Endothelial cell of umbilical vein (primary cell): ENCODE measurements at regions of chr11 and their contacts with region 1.

Region 1: GRCh38 chr11:64185816-64186498 is at the start of gene STIP1:
- DNase-seq: peak; percentile 100
- H3K4me3 ChIP-seq: peak within 1 kb of the TSS; percentile 17 to 65 (median 56)
- H3K27ac ChIP-seq: peak within 1 kb of the TSS; percentile 64
- H3K4me1 ChIP-seq: peaks cover 14% of the 10 kb centered on the region
- H3K27me3 ChIP-seq: no peaks in the 10 kb centered on the region
- CTCF ChIP-seq: peak; percentile 30 to 67
- POLR2A ChIP-seq: no peak
- total RNA-seq, gene STIP1: 223 and 226 TPM in 2 replicates

Region 2: DNA sequence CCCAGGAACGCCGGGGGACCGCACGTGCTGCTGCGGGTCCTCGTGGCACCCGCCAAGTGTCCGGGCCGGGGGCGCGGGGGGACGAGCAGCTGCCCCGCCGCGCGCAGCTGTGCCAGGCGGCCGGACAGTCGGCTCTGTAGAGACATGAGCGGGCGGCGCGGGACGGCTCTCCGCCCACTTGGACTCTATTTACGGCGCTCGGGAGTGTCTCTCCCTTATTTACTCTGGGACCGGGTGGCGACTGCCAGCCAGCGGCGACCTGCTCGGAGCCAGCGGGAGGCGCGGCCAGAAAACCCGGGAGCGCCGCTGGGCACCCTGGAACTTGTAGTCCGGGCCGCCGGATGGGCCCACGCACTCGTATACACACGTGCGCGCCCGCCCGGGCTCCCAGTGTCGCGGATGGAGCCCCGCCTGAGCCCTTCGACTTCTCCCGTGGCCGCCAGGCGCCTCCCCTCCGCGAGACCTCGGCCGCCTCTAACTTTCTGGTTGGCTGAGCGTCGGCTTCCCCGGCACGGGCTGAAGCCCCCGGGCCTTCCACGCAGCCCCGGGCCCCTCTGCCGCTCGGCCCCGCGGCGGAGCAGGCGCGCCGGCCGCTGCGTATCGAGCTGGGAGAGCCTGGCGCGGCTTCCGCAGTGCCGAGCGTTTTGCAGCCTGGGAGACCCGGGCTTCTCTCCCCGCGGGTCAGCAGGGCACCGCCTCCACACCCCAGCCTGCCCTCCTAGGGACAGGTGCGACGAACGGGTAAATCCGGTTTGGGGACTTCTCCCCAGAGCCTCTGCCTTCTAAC is 19.9 kb before region 1 on chr11 and contains the start of gene MACROD1:
- CTCF ChIA-PET with region 1: interaction called, 4 read pairs
- POLR2A ChIA-PET with region 1: interaction called, 6 read pairs
- dilution Hi-C with region 1: no loop called
- intact Hi-C with region 1: loop called (anchors 1 kb)
- DNase-seq: peak; percentile 84
- H3K4me3 ChIP-seq: peak within 1 kb of the TSS; percentile 25 to 50 (median 49)
- H3K27ac ChIP-seq: peak within 1 kb of the TSS; percentile 1
- H3K4me1 ChIP-seq: peaks cover 7% of the 10 kb centered on the region
- H3K27me3 ChIP-seq: no peaks in the 10 kb centered on the region
- CTCF ChIP-seq: no peak
- POLR2A ChIP-seq: peak; percentile 71
- total RNA-seq, gene MACROD1: 16.2 and 16.6 TPM in 2 replicates

Region 3: DNA sequence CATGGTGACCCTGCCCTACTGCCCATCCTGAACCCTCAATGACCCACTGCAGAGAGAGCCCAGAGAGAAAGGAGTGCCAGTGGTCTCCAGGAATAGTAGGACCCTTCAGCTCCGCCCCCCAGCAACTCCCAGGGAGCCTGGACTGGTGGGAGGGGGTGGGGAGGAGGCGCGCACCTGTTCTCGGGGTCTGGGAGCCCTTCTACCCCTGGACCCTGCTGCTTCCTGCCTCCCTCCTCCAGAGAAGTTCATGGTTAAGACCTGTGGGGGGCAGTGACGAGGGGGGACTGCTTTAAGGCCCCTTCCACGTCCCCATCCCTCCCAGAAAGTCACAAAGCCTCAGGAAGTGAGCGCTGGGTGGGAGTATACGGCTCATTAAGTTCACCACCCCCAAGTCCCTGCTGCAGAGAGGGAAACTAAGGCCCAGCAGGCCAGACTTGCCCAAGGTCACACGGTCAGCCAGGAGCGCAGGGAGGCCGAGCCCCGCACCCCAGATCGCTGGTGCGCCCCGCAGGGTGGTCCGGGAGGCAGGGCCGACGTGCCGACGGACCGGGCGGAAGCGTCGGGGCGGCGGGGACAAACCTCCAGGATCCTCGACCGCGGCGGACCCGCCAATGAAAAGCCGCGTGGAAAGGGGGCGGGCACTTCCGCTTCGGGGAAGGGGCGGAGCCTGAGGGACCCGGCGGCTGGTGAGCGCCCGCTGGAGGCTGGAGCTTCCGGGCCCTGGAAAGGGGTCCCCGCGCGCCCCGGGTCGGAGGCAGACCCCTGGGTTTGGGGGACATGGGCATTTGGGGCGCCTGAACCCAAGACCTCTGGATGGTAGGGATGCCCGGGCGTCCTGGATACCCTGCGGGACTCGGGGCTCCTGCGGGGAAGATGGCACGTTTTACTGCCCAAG is 39.9 kb after region 1 on chr11 and contains the starts of genes NUDT22 and TRPT1:
- CTCF ChIA-PET with region 1: no interaction called
- POLR2A ChIA-PET with region 1: interaction called, 3 read pairs
- dilution Hi-C with region 1: no loop called
- intact Hi-C with region 1: loop called (anchors 5 kb)
- DNase-seq: peak; percentile 83
- H3K4me3 ChIP-seq: peak within 1 kb of the TSS; percentile 62 to 70 (median 66)
- H3K27ac ChIP-seq: peak within 1 kb of the TSS; percentile 55
- H3K4me1 ChIP-seq: peaks cover 14% of the 10 kb centered on the region
- H3K27me3 ChIP-seq: no peaks in the 10 kb centered on the region
- CTCF ChIP-seq: peak; percentile 3 to 13
- POLR2A ChIP-seq: peak; percentile 90
- total RNA-seq, gene NUDT22: 37.1 and 37.8 TPM in 2 replicates
- total RNA-seq, gene TRPT1: 26.2 and 28.0 TPM in 2 replicates

Region 4: GRCh38 chr11:64284048-64284961 is 98.3 kb after region 1 on chr11 and contains the start of gene BAD:
- CTCF ChIA-PET with region 1: interaction called, 3 read pairs
- POLR2A ChIA-PET with region 1: no interaction called
- dilution Hi-C with region 1: no loop called
- intact Hi-C with region 1: loop called (anchors 5 kb)
- DNase-seq: peak; percentile 91
- H3K4me3 ChIP-seq: peak within 1 kb of the TSS; percentile 42 to 49 (median 44)
- H3K27ac ChIP-seq: peak within 1 kb of the TSS; percentile 35
- H3K4me1 ChIP-seq: peaks cover 11% of the 10 kb centered on the region
- H3K27me3 ChIP-seq: no peaks in the 10 kb centered on the region
- CTCF ChIP-seq: no peak
- POLR2A ChIP-seq: peak; percentile 52
- total RNA-seq, gene BAD: 61.6 and 65.3 TPM in 2 replicates